Activated naive CD4-positive, alpha-beta T cell treated with anti-CD3 and anti-CD28 coated beads for 36 hours (primary cell): ENCODE measurements at regions of chr19 and their contacts with region 1.

Region 1: DNA sequence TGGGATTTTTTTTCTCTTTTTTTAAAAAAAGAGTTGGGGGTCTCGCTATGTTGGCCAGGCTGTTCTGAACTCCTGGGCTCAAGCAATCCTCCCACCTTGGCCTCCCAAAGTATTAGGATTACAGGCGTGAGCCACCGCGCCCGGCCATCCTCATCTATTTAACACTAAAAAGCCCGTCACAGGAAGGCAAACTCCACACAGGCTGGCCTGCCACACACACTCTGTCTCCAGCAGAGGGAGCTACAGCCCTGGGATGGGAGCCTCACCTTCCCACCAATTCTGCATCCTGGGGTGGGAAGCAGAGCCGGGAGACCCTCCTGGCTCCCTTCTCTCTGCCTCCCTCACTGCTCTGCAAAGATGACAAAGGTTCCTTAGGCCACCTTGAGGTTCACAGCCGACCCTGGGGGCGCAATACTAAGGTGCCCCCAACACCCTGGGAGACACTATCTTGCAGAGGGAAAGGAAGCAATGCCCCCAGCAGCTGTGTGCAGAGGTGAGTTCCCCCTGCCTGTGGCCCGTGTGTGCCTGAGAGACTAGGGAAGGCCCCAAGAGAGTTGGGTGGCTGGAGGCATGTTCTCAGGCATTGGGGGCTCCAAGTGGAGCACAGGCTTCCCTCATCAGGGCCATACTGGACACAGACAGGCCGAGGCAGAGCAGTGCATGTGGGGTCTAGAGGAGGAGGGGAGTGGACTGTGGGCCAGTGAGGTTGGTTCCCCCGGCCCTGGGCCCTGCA is 27.4 kb upstream of the TIMM44 start:
- DNase-seq: peak; percentile 55
- H3K4me3 Mint-ChIP-seq: no peak overlapping the region
- H3K27ac Mint-ChIP-seq: no peak overlapping the region
- H3K4me1 Mint-ChIP-seq: no peaks in the 10 kb centered on the region
- H3K27me3 Mint-ChIP-seq: no peaks in the 10 kb centered on the region

Region 2: GRCh38 chr19:8005534-8006256 is 34.8 kb after region 1 on chr19 and contains the start of gene ELAVL1:
- CTCF ChIA-PET with region 1: interaction called, 3 read pairs
- intact Hi-C with region 1: loop called (anchors 2 kb)
- DNase-seq: peak; percentile 89
- H3K4me3 Mint-ChIP-seq: peak within 1 kb of the TSS; percentile 94
- H3K27ac Mint-ChIP-seq: peak within 1 kb of the TSS; percentile 78
- H3K4me1 Mint-ChIP-seq: peaks cover 35% of the 10 kb centered on the region
- H3K27me3 Mint-ChIP-seq: no peaks in the 10 kb centered on the region
- total RNA-seq, gene ELAVL1: 135 to 140 TPM

Region 3: DNA sequence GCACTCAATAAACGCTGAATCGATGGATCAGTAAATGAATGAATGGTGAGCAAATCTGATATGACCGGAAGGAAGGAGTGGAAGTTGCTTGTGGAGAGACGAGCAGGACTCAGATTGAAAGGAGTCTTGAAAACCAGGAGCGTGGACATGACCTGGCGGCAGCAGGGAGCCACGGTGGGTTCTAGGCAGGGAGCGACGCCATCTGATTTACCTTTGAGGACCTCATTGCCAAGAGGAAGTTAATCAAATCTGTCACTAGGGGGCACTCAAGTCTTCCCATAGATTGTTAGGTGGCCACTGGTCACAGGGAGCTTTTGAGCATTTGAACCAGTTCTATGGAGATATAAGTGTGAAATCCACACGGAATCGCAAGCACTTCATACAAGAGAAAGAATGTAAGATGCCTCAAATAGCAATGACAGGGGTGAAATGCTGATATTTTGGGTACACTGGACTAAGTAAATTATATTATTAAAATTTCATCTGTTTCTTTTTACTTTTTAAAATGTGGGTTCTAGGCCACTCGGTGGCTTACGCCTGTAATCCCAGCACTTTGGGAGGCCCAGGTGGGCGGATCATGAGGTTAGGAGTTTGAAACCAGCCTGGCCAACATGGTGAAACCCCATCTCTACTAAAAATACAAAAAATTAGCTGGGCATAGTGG is 187.7 kb after region 1 on chr19:
- CTCF ChIA-PET with region 1: no interaction called
- intact Hi-C with region 1: loop called (anchors 10 kb)
- DNase-seq: peak; percentile 63
- H3K4me3 Mint-ChIP-seq: no peak overlapping the region
- H3K27ac Mint-ChIP-seq: no peak overlapping the region
- H3K4me1 Mint-ChIP-seq: peaks cover 1% of the 10 kb centered on the region
- H3K27me3 Mint-ChIP-seq: peaks cover 13% of the 10 kb centered on the region

Region 4: DNA sequence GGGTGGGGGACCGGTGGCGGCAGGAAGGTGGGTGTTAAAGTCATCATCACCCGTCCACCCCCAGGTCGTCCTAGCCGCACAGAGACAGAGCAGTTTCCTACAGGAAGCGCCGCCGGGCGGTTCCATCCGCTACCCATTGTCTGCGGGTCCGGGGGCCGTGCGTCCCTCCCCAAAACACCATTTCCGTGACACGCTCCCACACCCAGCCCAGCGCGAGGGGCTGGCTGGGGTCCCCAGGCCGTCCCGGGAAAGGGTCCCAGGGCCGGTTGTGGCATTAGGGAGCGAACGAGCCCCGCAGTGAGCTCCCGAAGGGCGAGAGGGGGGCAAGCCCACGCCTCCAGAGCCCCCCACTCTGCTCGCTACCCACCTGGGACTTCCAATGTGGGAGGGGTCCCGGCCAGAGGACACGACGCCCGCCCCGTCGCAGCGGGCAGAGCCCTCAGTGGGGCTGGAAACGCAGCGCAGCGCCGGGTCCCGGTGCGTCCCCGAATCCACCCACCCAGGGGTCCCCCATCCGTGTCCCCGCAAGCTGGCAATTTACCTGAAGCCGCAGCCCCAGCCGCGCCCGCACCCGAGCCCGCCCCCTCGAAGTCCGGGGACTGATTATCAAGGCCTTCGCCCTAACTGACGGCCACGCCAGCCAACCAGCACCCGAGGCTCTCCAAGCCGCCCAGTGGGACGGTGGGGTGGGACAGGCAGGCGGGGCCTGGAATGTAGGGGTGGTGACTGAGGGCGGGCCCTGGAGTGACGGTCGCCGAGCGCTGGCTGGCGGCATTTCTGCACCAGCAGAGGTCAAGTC is 372.0 kb after region 1 on chr19 and contains the start of gene KANK3:
- CTCF ChIA-PET with region 1: no interaction called
- intact Hi-C with region 1: no loop called
- DNase-seq: peak; percentile 96
- H3K4me3 Mint-ChIP-seq: peak within 1 kb of the TSS; percentile 73
- H3K27ac Mint-ChIP-seq: no peak within 1 kb of the TSS
- H3K4me1 Mint-ChIP-seq: peaks cover 4% of the 10 kb centered on the region
- H3K27me3 Mint-ChIP-seq: peaks cover 7% of the 10 kb centered on the region
- total RNA-seq, gene KANK3: 0.17 to 0.36 TPM